ENCODE measurements at regions of chr3 and their contacts with region 1.

Region 1: DNA sequence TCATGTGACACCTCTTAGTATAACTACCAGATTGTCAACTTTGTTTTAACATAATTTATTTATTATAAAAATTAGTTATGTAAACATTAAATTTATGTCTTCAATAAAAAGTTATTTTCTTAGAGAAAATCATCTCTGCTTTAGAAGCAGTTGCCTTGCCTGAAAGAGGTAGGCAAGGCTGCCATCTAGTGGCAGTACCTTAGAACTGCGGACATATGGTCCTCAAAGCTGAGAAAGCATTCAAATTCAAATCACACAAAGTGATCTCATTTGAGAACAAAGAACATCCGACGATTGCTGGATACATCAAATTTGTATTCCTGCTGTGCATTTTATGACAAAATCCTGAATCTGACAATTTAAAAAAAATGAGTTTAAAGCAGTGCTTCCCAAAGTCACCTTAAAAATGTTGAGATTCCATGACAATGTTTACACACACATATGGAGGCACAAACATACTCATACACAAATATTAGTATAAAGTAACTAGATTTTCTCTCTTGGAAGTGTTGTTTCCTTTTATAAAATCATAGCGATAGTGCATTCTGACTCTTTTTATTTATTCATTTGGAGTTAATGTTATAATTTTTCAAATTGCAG is 617.4 kb downstream of the CADM2 start:
- DNase-seq: peak; percentile 54
- ATAC-seq: peak; percentile 51
- H3K4me3 ChIP-seq: no peak overlapping the region
- H3K4me3 Mint-ChIP-seq: no peak overlapping the region
- H3K27ac ChIP-seq: no peak overlapping the region
- H3K27ac Mint-ChIP-seq: no peak overlapping the region
- H3K4me1 ChIP-seq: no peaks in the 10 kb centered on the region
- H3K4me1 Mint-ChIP-seq: no peaks in the 10 kb centered on the region
- H3K27me3 ChIP-seq: no peaks in the 10 kb centered on the region
- H3K27me3 Mint-ChIP-seq: no peaks in the 10 kb centered on the region
- CTCF ChIP-seq: peak; percentile 92

Region 2: DNA sequence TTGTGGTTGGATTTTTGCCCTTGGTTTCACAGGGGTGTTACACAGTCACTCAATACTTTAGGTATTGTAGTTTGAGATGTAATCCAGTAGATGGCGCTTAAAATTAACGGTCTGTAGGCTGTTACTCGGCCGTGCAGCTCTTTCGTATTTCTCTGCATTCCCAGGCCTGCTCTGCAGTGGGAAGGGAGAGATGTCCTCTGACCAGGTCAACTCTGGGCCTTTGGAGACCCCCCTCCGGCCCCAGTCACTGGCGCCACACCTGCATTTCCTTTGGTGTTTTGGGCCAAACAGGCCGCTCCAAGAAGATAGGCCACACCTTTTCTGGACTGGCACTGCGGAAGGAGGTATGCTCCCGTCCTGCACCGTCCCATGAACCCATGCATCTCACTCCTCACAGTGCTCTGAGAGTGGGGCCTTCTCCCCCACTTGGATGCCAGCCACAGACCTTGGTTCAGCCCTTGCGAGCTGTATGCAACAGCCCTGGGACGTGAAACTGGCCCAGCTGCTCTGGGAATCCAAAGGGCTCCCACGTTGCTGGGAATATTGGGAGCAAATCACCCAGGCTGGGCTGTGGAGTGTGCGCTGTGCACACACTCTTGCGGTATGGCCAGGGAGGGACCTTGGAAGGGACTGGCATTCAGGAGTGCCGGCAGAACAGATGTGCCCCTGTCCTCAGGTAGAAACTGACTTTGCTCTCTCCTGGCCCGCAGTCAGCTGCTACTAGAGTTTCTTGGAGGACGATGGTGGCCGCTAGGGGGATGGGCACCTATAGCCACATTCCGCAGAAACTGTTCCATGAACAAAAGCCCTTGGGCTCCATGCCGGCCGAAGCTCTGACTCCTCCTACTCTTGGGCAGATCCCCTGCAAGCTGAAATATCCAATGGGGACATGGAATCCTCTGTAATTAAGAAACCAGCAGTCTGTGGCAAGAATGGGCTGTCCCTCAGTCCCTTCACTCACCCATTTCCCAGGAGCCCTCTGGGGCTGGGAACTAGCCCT is 1027.9 kb before region 1 on chr3:
- CTCF ChIA-PET with region 1: interaction called, 4 read pairs
- POLR2A ChIA-PET with region 1: no interaction called
- intact Hi-C with region 1: loop called (anchors 5 kb)
- DNase-seq: peak; percentile 21
- ATAC-seq: no peak
- H3K4me3 ChIP-seq: no peak overlapping the region
- H3K4me3 Mint-ChIP-seq: no peak overlapping the region
- H3K27ac ChIP-seq: no peak overlapping the region
- H3K27ac Mint-ChIP-seq: no peak overlapping the region
- H3K4me1 ChIP-seq: no peaks in the 10 kb centered on the region
- H3K4me1 Mint-ChIP-seq: no peaks in the 10 kb centered on the region
- H3K27me3 ChIP-seq: no peaks in the 10 kb centered on the region
- H3K27me3 Mint-ChIP-seq: no peaks in the 10 kb centered on the region
- CTCF ChIP-seq: no peak

Region 3: GRCh38 chr3:85161526-85161925 is 414.7 kb before region 1 on chr3:
- CTCF ChIA-PET with region 1: no interaction called
- POLR2A ChIA-PET with region 1: no interaction called
- intact Hi-C with region 1: no loop called
- DNase-seq: no peak
- ATAC-seq: no peak
- H3K4me3 ChIP-seq: no peak overlapping the region
- H3K4me3 Mint-ChIP-seq: no peak overlapping the region
- H3K27ac ChIP-seq: no peak overlapping the region
- H3K27ac Mint-ChIP-seq: no peak overlapping the region
- H3K4me1 ChIP-seq: no peaks in the 10 kb centered on the region
- H3K4me1 Mint-ChIP-seq: no peaks in the 10 kb centered on the region
- H3K27me3 ChIP-seq: no peaks in the 10 kb centered on the region
- H3K27me3 Mint-ChIP-seq: no peaks in the 10 kb centered on the region
- CTCF ChIP-seq: no peak